ENCODE measurements at regions of chr1 and their contacts with region 1.

Region 1: DNA sequence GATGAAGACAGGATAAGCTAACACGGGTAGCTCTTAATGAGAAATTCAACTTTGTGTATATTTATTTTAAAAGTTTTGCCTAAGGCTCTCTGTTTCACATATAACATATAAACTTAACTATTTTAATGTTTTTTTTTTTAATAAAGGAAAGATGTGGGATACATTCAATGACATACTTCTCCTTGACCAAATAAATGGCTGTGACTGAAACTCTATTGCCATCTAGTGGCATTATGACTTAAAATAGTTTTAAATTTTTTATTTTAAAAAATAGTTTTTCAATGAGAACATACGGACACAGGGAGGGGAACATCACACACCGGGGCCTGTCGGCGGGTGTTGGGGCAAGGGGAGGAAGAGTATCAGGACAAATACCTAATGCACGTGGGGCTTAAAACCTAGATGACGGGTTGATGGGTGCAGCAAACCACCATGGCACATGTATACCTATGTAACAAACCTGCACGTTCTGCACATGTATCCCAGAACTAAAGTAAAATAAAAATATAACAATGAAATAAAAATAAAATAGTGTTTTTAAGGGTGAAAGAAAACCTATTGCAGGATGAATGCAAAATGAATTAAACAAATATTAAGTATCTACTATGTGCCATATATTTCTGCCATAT is 83.4 kb downstream of the LYST start:
- DNase-seq: no peak
- ATAC-seq: peak; percentile 57
- H3K4me3 ChIP-seq: no peak overlapping the region
- H3K27ac ChIP-seq: no peak overlapping the region
- H3K4me1 ChIP-seq: no peaks in the 10 kb centered on the region
- H3K27me3 ChIP-seq: no peaks in the 10 kb centered on the region
- CTCF ChIP-seq: peak; percentile 29 to 52 (median 32); a peak in 3 of 6 replicates
- EP300 ChIP-seq: no peak
- POLR2A ChIP-seq: no peak
- RAD21 ChIP-seq: peak; percentile 77

Region 2: DNA sequence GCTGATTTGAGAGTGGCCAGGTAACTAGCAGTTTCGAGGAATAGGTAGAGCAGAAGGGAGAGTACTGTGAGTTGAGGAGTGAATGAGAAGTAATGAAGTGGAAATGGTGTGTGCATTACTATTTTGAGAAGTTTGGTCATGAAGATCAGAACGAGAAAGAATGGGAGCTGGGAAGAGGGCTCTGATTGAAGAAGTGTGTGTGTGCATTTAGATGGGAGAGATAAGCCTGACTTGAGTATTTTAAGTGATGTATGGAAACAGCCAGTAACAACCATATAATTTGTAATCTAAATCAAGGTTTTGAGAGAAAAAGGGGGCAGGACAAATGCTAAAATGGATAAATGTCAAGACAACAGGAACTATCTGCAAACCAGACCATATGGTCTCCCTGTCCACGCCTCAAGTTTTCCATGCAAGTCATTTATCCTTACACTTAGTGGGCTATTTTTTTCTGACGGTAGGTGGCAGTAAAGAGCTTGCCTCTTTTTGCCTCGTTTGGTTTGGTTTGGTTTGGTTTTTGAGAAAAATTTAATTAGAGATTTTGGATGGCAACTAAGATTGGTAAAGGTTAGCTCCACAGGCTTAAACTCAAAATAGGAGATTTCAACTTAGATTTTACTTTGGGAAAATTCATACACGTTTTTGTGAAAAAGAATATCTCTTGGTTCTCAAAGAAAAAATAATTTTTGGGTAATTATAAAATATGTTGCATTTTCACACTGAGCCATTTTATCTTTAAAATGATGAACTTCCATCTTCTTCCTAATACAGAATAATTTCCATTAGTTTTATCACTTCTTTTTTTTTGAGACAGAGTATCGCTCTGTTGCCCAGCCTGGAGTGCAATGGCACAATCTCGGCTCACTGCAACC is 269.5 kb before region 1 on chr1:
- CTCF ChIA-PET with region 1: interaction called, 29 read pairs
- POLR2A ChIA-PET with region 1: no interaction called
- RAD21 ChIA-PET with region 1: interaction called, 3 read pairs
- SMC1A ChIA-PET with region 1: interaction called, 8 read pairs
- in situ Hi-C with region 1: loop called (anchors 5 kb)
- intact Hi-C with region 1: loop called (anchors 2 kb)
- DNase-seq: no peak
- ATAC-seq: peak; percentile 70
- H3K4me3 ChIP-seq: no peak overlapping the region
- H3K27ac ChIP-seq: no peak overlapping the region
- H3K4me1 ChIP-seq: no peaks in the 10 kb centered on the region; the same call in 1 of the 2 replicates
- H3K27me3 ChIP-seq: no peaks in the 10 kb centered on the region
- CTCF ChIP-seq: peak; percentile 79 to 93 (median 82)
- EP300 ChIP-seq: no peak
- POLR2A ChIP-seq: no peak
- RAD21 ChIP-seq: peak; percentile 94

Region 3: GRCh38 chr1:235720544-235720943 is 62.7 kb before region 1 on chr1:
- CTCF ChIA-PET with region 1: no interaction called
- POLR2A ChIA-PET with region 1: interaction called, 12 read pairs
- RAD21 ChIA-PET with region 1: no interaction called
- SMC1A ChIA-PET with region 1: interaction called, 4 read pairs
- in situ Hi-C with region 1: no loop called
- intact Hi-C with region 1: no loop called
- DNase-seq: no peak
- ATAC-seq: no peak
- H3K4me3 ChIP-seq: no peak overlapping the region
- H3K27ac ChIP-seq: no peak overlapping the region
- H3K4me1 ChIP-seq: no peaks in the 10 kb centered on the region
- H3K27me3 ChIP-seq: no peaks in the 10 kb centered on the region
- CTCF ChIP-seq: no peak
- EP300 ChIP-seq: no peak
- POLR2A ChIP-seq: no peak
- RAD21 ChIP-seq: no peak

Region 4: GRCh38 chr1:235767795-235768194 is 15.5 kb before region 1 on chr1:
- CTCF ChIA-PET with region 1: interaction called, 28 read pairs
- POLR2A ChIA-PET with region 1: no interaction called
- RAD21 ChIA-PET with region 1: interaction called, 3 read pairs
- SMC1A ChIA-PET with region 1: interaction called, 7 read pairs
- in situ Hi-C with region 1: no loop called
- intact Hi-C with region 1: no loop called
- DNase-seq: peak; percentile 45
- ATAC-seq: peak; percentile 96
- H3K4me3 ChIP-seq: 0 out of 2 replicates have a peak overlapping the region, but pooled peaks have one; percentile 2
- H3K27ac ChIP-seq: no peak overlapping the region
- H3K4me1 ChIP-seq: peaks cover 9% of the 10 kb centered on the region
- H3K27me3 ChIP-seq: no peaks in the 10 kb centered on the region
- CTCF ChIP-seq: no peak
- EP300 ChIP-seq: no peak
- POLR2A ChIP-seq: no peak
- RAD21 ChIP-seq: no peak

Region 5: DNA sequence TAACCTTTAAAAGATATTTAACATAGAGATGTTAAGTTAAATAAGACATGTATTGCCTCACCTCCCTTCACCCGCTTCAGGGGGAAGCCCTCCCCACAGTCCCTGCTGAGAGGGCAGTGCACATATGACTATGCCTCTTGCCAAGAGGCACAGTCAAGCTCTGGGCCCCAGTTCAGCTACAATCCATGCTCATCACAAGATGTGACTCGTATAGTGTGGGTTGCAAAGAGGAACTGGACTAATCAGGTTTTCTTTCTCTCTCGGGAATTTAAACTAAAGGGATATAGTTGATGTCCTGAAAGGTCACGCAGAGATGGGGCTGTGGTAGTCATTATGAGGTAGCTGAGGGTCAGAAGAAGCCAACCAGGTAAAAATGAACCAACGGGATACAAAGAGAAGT is 47.9 kb after region 1 on chr1:
- CTCF ChIA-PET with region 1: interaction called, 4 read pairs
- POLR2A ChIA-PET with region 1: no interaction called
- RAD21 ChIA-PET with region 1: interaction called, 3 read pairs
- SMC1A ChIA-PET with region 1: interaction called, 23 read pairs
- in situ Hi-C with region 1: no loop called
- intact Hi-C with region 1: no loop called
- DNase-seq: peak; percentile 35
- ATAC-seq: peak; percentile 99
- H3K4me3 ChIP-seq: no peak overlapping the region
- H3K27ac ChIP-seq: no peak overlapping the region
- H3K4me1 ChIP-seq: no peaks in the 10 kb centered on the region
- H3K27me3 ChIP-seq: no peaks in the 10 kb centered on the region
- CTCF ChIP-seq: no peak
- EP300 ChIP-seq: peak in 1 of 2 experiments; percentile 34; a peak in 1 of 4 replicates
- POLR2A ChIP-seq: no peak
- RAD21 ChIP-seq: no peak

Measured in GM12878 (cell line).